PC-9 (cell line): ENCODE measurements at regions of chr5 and their contacts with region 1.

Region 1: DNA sequence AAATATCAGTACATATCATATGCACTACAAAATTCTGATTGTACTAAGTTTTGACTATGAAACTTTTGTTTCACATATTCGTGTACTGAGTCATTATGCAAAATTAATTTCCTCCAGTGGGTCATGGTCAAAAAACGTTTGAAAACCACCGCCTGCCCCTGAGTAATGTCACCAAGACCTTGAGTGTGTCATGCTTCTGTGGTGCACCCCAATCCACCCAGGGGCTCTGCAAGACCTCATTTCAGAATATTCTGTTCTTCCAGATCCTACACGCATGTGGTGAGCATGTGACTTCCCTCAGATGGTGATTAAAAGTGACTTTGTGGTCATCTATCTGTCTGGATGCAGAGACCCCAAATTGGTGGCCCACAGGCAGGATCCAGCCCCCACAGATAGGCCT is 31.0 kb downstream of the ABLIM3 start:
- DNase-seq: peak; percentile 50 to 61
- H3K4me3 ChIP-seq: no peak overlapping the region
- H3K27ac ChIP-seq: no peak overlapping the region
- H3K4me1 ChIP-seq: peaks cover 17% of the 10 kb centered on the region
- H3K27me3 ChIP-seq: no peaks in the 10 kb centered on the region
- CTCF ChIP-seq: no peak

Region 2: DNA sequence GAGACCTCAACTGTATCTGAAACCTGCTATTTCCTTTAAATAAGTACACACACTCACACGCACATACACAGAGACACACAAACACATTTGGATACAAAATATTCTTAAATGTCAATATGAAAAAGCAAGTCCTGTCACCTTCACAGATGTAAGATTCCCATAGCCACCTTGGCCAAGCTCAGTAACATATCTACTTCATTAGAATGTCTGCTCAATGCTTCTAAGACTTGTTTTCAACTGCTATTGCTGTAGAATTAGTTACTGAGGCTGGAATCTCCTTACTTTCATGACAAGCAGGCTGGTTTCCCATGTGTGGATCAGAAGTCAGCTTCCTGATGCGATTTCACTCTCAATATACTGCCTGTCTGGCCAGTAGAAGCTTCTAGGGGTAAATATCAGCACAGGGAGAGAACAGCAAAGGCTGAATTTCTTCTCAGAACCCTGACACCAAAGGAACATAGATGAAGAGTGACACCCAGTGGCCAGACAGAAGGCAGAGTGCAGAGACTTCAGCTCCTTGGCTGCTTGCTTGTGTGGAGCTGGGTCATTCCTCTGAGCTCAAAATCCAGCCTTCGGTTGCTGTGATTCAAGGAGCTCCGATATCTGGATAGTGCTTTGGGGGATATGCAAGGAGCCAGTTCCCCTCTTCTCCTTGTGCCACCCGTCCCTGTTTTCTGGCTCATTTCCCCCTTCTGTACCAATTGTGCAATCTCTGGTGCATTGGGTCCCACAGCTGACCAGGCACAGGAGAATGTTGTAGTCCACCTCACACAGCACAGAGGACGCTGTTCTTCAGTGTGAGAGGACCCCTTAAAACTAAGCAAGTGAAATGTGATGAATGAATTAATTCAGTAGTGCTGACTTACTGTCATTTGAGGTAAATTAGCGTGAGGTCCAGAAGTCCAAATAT is 57.6 kb before region 1 on chr5:
- CTCF ChIA-PET with region 1: no interaction called
- POLR2A ChIA-PET with region 1: no interaction called
- intact Hi-C with region 1: no loop called
- DNase-seq: peak; percentile 74 to 82
- H3K4me3 ChIP-seq: peak overlapping the region; percentile 22; the same call in 1 of the 2 replicates
- H3K27ac ChIP-seq: peak overlapping the region; percentile 92
- H3K4me1 ChIP-seq: peaks cover 66% of the 10 kb centered on the region
- H3K27me3 ChIP-seq: no peaks in the 10 kb centered on the region
- CTCF ChIP-seq: peak; percentile 90

Region 3: DNA sequence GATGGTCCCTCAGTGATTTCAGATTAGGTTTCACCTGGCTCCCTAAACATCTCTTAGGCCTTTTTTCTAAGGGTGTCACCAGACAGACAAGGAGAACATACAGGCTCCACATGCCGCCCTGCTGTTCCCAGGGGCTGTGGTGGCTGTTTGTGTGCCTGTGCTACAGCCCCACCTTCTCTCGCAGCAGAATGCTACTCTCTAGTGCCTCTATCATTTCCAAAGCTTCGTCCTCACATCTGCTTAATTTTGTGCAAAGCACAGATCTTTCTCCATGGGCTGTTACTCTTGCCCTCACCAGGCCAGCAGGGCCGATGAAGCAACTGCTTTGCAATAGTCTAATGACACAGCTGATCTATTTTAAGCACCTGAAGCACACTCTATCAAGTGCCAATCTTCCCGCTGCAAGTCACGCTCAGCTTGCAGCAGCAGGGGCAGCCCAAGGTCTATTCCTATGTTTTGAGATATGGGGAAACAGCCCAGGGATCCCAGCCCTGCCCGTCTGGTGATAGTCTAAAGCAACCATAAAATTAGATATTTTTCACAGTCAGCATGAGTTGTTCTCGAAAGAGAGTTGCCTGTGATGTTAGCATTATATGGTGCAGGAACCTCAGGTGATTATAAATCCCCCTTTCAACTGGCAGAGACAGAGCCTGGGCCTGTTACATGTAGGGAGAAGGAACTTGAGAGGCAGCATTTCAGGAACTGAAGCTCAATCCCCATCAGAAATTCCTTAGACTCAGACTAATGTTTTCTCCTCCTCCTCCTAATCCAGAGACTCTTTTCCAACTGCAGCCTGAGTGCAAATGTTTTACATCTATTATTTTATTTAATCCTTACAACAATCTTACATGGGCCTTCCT is 18.3 kb before region 1 on chr5:
- CTCF ChIA-PET with region 1: no interaction called
- POLR2A ChIA-PET with region 1: no interaction called
- intact Hi-C with region 1: loop called (anchors 1 kb)
- DNase-seq: peak in 1 of 2 experiments; percentile 46
- H3K4me3 ChIP-seq: no peak overlapping the region
- H3K27ac ChIP-seq: peak overlapping the region; percentile 74
- H3K4me1 ChIP-seq: peaks cover 58% of the 10 kb centered on the region
- H3K27me3 ChIP-seq: no peaks in the 10 kb centered on the region
- CTCF ChIP-seq: no peak

Region 4: DNA sequence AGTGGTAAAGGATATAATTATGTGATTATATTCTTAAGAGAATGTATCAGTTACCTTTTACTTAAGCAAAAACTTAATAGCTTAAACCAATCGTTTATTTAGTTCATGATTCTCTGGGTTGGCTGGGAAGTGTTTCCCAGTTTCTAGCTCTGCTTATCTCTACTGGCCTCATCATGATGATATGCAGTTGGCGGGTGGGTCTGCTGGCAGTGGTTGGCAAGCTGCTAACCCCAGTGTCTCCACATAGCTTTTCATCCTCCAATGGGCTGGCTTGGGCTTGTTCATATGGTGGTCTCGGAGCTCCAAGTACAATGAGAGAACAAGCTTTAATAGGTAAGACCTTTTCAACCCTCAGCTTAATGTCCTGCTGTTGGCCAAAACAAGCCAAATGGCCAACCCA is 12.8 kb after region 1 on chr5:
- CTCF ChIA-PET with region 1: interaction called, 6 read pairs
- POLR2A ChIA-PET with region 1: interaction called, 7 read pairs
- intact Hi-C with region 1: loop called (anchors 1 kb)
- DNase-seq: no peak
- H3K4me3 ChIP-seq: no peak overlapping the region
- H3K27ac ChIP-seq: no peak overlapping the region
- H3K4me1 ChIP-seq: peaks cover 29% of the 10 kb centered on the region
- H3K27me3 ChIP-seq: no peaks in the 10 kb centered on the region
- CTCF ChIP-seq: no peak

Region 5: GRCh38 chr5:149205625-149206523 is 33.6 kb after region 1 on chr5:
- CTCF ChIA-PET with region 1: no interaction called
- POLR2A ChIA-PET with region 1: no interaction called
- intact Hi-C with region 1: loop called (anchors 1 kb)
- DNase-seq: peak; percentile 49 to 78
- H3K4me3 ChIP-seq: no peak overlapping the region
- H3K27ac ChIP-seq: peak overlapping the region; percentile 14; the same call in 1 of the 2 replicates
- H3K4me1 ChIP-seq: peaks cover 9% of the 10 kb centered on the region; the same call in 1 of the 2 replicates
- H3K27me3 ChIP-seq: no peaks in the 10 kb centered on the region
- CTCF ChIP-seq: no peak

Region 6: DNA sequence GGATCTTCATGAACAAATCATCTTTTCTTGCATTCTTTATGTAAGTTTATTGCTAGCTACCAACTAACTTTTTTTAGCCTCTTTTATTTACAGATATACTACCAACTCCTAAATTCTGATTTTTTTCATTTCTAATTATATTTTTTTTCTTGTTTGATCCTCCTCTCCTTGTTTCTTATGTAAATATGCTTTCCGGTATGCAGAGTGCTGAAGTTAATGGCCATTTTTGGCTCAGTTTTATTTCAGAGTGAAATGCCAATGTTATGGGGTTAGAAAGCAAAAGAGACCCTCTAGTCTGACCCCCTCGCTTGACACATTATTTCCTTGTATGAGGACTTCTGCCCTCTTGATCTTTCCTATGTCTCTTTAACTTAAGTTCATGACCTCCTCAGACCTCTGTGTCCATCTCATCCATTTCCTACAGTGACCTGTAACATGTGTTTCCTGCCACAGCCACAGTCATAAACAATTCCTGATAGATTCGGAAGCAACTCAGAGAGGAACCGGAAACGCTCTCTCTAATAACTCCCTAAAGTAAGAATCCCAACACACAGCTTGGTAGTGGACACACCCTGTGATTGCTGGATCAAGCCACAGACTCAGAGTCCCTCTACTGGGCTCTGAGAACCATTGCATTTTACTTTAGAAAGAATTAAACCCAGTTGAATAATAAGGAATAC is 56.5 kb after region 1 on chr5:
- CTCF ChIA-PET with region 1: no interaction called
- POLR2A ChIA-PET with region 1: no interaction called
- intact Hi-C with region 1: loop called (anchors 5 kb)
- DNase-seq: peak; percentile 40 to 53
- H3K4me3 ChIP-seq: no peak overlapping the region
- H3K27ac ChIP-seq: no peak overlapping the region
- H3K4me1 ChIP-seq: peaks cover 18% of the 10 kb centered on the region
- H3K27me3 ChIP-seq: no peaks in the 10 kb centered on the region
- CTCF ChIP-seq: peak; percentile 68